Prostate gland (tissue), 2 donors: ENCODE measurements at regions of chr1 and their contacts with region 1.

Region 1: DNA sequence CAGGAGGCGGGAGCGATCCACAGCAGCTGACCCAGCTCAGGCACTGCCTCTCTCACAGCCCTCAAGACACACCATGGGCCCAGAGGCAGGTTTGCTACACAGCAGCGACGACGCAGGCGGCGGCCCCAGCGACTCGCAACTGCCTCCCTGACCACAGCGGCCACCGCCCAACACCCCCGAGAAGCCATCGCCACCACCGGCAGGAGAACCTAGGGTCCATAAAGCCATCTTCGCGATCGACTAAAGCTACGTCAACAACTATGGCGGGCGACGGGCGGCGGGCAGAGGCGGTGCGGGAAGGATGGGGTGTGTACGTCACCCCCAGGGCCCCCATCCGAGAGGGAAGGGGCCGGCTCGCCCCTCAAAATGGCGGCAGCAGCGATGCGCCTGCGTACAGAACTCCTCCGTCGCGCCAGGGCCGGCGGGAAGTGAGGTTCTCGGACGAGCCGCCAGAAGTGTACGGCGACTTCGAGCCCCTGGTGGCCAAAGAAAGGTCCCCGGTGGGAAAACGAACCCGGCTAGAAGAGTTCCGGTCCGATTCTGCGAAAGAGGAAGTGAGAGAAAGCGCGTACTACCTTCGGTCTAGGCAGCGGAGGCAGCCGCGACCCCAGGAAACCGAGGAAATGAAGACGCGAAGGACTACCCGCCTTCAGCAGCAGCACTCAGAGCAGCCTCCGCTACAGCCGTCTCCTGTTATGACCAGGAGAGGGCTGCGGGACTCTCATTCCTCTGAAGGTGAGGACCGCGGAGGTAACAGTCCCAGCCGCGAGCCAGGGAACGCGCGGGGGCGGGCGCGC is at the start of gene TOR1AIP1:
- DNase-seq: peak; percentile 97
- H3K4me3 ChIP-seq: peak within 1 kb of the TSS; percentile 72 to 79
- H3K27ac ChIP-seq: peak within 1 kb of the TSS; percentile 99 to 100
- H3K4me1 ChIP-seq: no peaks in the 10 kb centered on the region
- H3K27me3 ChIP-seq: no peaks in the 10 kb centered on the region
- CTCF ChIP-seq: peak; percentile 29 to 87 (median 58)
- POLR2A ChIP-seq: peak; percentile 77
- total RNA-seq, gene TOR1AIP1: 81.7 to 86.4 TPM

Region 2: GRCh38 chr1:179025125-179025974 is 857.1 kb before region 1 on chr1 and contains the start of gene FAM20B:
- intact Hi-C with region 1: no loop called
- DNase-seq: peak; percentile 93
- H3K4me3 ChIP-seq: peak within 1 kb of the TSS; percentile 76 to 96
- H3K27ac ChIP-seq: peak within 1 kb of the TSS; percentile 90 to 94
- H3K4me1 ChIP-seq: no peaks in the 10 kb centered on the region
- H3K27me3 ChIP-seq: no peaks in the 10 kb centered on the region
- CTCF ChIP-seq: peak in 2 of 4 experiments; percentile 26 to 29
- POLR2A ChIP-seq: no peak
- total RNA-seq, gene FAM20B: 20.1 to 21.6 TPM

Region 3: GRCh38 chr1:179954493-179955297 is 72.3 kb after region 1 on chr1 and contains the start of gene CEP350:
- intact Hi-C with region 1: loop called (anchors 2 kb)
- DNase-seq: peak; percentile 98
- H3K4me3 ChIP-seq: peak within 1 kb of the TSS; percentile 91 to 95
- H3K27ac ChIP-seq: peak within 1 kb of the TSS; percentile 93 to 96
- H3K4me1 ChIP-seq: no peaks in the 10 kb centered on the region
- H3K27me3 ChIP-seq: no peaks in the 10 kb centered on the region
- CTCF ChIP-seq: peak in 2 of 4 experiments; percentile 11 to 36
- POLR2A ChIP-seq: peak; percentile 85
- total RNA-seq, gene CEP350: 43.3 to 67.4 TPM